Activated naive CD4-positive, alpha-beta T cell treated with anti-CD3 and anti-CD28 coated beads, Interleukin-2, amount 10 ng/mL, durations not matched to agents 7 days and 5 days (primary cell): ENCODE measurements at regions of chr2 and their contacts with region 1.

Region 1: DNA sequence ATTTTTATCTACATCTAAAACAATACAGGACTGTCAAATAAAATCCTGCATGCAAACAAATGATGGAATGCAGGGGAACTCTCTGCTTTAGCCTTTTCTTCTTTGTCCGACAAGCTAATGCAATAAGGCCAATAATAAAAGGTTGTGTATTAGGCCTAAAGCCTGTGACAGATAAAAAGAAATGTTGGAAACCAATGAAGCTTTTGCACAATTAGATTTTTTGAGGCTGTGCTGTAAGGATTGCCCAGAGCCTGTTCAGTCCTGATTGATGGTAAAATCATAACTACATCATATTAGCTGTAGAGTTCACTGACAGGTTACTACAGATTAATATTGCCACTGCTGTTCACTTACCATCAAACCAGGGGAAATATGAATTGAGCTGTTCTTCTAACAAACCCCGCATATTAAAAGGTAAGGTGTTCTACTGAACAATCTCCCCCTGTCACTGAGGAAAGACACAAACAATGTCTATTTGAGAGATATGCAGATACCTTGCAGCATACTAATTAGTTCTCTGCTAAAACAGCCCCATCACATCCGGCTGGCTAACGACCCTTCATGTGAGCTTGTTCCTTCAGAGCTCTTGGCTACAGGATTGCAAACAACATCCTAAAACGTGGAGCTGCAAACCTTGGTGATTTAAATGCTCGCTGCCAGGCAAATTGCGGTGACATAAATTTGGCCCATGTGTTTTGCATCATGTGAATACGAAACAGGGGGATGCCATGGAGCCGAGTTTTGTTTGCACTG is 305.4 kb downstream of the MTX2 start:
- DNase-seq: no peak
- H3K4me3 Mint-ChIP-seq: no peak overlapping the region
- H3K27ac Mint-ChIP-seq: no peak overlapping the region
- H3K4me1 Mint-ChIP-seq: no peaks in the 10 kb centered on the region
- H3K27me3 Mint-ChIP-seq: peaks cover 9% of the 10 kb centered on the region

Region 2: DNA sequence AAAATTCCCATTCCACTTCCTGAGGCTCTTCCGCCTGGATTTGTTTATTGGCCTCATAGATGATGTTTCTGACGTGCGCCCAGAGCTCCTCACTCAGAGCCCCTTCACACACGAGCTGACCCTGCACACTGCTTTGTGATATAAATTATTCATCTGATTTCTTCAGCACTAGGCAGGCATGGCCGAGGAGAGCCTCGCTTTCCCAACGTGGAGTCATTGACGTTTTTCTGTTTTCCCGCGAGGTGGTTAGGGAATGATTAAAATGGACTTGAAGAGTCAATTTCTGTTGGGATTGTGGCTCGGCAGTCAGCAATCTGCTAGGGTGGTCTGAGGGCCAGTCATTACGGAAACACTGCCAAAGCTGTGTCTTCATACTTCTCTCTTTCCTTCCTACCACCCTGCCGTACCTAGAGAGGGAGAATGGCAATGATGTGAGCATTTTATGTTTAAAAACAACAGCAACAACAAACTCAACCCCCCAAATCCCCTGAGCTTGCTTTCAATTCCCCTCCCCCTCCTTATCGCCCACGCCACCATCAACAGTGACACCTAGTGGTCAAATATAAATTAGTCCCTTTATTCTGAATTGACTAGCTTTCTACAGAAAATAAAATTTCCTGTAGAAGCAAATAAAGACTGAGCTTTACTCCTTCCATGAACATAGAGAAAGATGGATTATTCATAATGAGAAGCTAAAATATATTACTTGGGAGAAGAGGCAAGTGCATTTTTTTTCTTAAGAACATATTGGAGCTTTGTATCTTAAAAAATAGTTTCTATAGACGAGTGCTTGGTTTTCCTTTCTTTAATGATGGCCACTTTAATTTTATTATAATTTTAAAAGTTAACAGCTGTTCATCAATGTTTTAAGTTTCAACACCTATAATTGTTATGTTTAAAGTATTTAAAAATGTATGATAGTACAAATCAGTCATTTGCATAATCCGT is 20.3 kb before region 1 on chr2:
- CTCF ChIA-PET with region 1: interaction called, 10 read pairs
- DNase-seq: peak; percentile 25
- H3K4me3 Mint-ChIP-seq: peak overlapping the region; percentile 66
- H3K27ac Mint-ChIP-seq: no peak overlapping the region
- H3K4me1 Mint-ChIP-seq: peaks cover 12% of the 10 kb centered on the region
- H3K27me3 Mint-ChIP-seq: peaks cover 47% of the 10 kb centered on the region